ENCODE measurements at regions of chr1 and their contacts with region 1.

Region 1: GRCh38 chr1:15128520-15129313 is 24.8 kb upstream of the TMEM51 start:
- H3K4me3 Mint-ChIP-seq: no peak overlapping the region
- H3K27ac Mint-ChIP-seq: peak overlapping the region; percentile 26
- H3K4me1 Mint-ChIP-seq: peaks cover 15% of the 10 kb centered on the region
- H3K27me3 Mint-ChIP-seq: peaks cover 10% of the 10 kb centered on the region

Region 2: DNA sequence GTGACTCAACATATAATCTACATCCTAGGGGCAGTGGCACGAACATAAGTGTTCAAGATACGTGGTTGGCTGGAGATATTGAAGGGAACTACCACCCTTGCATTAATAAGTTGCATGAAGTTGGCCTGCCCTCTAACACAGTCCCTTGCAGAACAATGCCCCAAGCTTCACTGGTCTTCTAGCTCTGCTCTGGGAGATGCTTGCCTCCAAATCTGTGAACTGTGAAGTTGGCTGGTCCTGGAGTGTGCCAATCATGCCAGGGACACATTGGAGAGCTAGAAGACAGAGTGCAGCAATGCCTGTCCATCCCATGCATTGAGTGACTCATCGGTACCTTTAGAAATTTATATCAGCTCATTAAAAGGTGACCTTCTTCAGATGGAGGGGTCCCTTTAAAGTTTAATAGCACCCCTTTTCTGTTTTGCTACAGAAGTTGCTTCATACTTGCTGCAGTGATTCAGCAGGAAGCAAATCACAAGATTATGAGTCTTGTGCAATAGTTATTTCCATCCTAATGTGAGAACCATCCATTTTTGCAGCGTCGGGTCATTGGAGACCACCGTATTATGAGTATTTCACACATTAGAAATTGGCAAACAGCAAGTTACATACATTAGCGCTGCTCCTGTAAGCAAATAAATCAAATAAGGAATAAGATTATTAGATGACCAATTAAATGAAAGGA is 585.4 kb before region 1 on chr1:
- intact Hi-C with region 1: no loop called
- H3K4me3 Mint-ChIP-seq: no peak overlapping the region
- H3K27ac Mint-ChIP-seq: no peak overlapping the region
- H3K4me1 Mint-ChIP-seq: peaks cover 15% of the 10 kb centered on the region
- H3K27me3 Mint-ChIP-seq: peaks cover 34% of the 10 kb centered on the region

Region 3: GRCh38 chr1:14980621-14981218 is 148.0 kb before region 1 on chr1:
- intact Hi-C with region 1: no loop called
- H3K4me3 Mint-ChIP-seq: no peak overlapping the region
- H3K27ac Mint-ChIP-seq: no peak overlapping the region
- H3K4me1 Mint-ChIP-seq: no peaks in the 10 kb centered on the region
- H3K27me3 Mint-ChIP-seq: no peaks in the 10 kb centered on the region

Region 4: DNA sequence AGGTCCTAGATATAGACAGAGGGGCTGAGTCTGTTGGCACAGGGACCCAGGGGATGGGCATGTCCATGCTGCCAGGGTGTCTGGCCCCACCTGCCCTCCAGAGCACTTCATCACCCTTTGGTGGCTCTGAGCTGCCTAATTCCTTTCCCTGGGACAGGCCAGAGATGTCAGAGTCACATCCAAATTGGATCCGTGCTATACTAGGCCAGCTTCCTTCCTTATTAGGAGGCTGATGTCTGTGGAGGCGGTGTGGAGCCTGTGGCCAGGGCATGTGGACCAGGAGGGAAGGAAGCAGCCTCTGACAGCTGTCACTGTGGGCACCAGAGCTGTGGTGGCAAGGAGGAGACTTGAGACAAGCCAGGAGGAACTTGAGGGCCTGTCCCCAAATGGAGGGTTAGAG is 52.9 kb before region 1 on chr1:
- intact Hi-C with region 1: no loop called
- H3K4me3 Mint-ChIP-seq: no peak overlapping the region
- H3K27ac Mint-ChIP-seq: no peak overlapping the region
- H3K4me1 Mint-ChIP-seq: peaks cover 18% of the 10 kb centered on the region
- H3K27me3 Mint-ChIP-seq: peaks cover 5% of the 10 kb centered on the region

Region 5: GRCh38 chr1:15272009-15272788 is 143.5 kb after region 1 on chr1:
- intact Hi-C with region 1: loop called (anchors 1 kb)
- H3K4me3 Mint-ChIP-seq: peak overlapping the region; percentile 32
- H3K27ac Mint-ChIP-seq: peak overlapping the region; percentile 22
- H3K4me1 Mint-ChIP-seq: peaks cover 43% of the 10 kb centered on the region
- H3K27me3 Mint-ChIP-seq: no peaks in the 10 kb centered on the region

Region 6: DNA sequence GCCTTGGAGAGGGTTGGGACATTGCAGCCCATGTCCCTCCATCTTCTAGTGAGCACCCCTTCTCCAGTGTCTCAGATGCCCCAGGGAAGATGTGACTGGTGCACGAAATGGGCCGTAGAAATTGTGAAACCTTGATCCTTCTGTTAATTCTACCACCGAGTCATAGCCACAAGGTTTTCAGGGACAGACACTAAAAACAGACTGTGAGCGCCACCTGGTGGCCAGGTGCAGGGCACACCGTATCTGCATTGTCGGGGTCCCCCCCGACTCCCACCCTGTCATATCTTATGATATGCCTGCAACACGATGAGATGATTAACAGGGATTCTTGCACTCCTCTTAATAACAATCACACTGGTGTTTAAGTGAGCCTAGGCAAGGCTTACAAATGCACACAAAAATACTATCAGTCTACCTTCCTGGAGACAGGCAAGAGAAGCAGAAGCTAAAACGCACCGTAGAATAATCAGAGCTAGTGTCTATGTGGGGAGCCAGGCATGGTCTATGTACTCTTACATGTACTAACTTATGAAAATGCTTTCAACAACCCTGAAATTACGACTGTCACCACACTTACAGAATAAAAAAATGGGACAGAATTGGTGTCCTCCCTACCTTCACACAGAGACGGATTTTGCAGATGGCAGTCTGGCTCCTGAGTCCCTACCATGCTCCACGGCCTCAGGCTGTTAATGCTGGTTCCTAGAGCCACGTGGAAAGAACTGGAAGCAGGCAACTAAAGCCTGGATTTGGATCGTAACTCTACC is 176.2 kb after region 1 on chr1:
- intact Hi-C with region 1: loop called (anchors 1 kb)
- H3K4me3 Mint-ChIP-seq: no peak overlapping the region
- H3K27ac Mint-ChIP-seq: no peak overlapping the region
- H3K4me1 Mint-ChIP-seq: peaks cover 16% of the 10 kb centered on the region
- H3K27me3 Mint-ChIP-seq: peaks cover 13% of the 10 kb centered on the region